Right ventricle myocardium inferior (tissue), 1 donor: ENCODE measurements at regions of chr19 and their contacts with region 1.

Region 1: GRCh38 chr19:49546825-49547565 is 19.2 kb downstream of the RCN3 start:
- DNase-seq: no peak
- ATAC-seq: peak; percentile 83

Region 2: DNA sequence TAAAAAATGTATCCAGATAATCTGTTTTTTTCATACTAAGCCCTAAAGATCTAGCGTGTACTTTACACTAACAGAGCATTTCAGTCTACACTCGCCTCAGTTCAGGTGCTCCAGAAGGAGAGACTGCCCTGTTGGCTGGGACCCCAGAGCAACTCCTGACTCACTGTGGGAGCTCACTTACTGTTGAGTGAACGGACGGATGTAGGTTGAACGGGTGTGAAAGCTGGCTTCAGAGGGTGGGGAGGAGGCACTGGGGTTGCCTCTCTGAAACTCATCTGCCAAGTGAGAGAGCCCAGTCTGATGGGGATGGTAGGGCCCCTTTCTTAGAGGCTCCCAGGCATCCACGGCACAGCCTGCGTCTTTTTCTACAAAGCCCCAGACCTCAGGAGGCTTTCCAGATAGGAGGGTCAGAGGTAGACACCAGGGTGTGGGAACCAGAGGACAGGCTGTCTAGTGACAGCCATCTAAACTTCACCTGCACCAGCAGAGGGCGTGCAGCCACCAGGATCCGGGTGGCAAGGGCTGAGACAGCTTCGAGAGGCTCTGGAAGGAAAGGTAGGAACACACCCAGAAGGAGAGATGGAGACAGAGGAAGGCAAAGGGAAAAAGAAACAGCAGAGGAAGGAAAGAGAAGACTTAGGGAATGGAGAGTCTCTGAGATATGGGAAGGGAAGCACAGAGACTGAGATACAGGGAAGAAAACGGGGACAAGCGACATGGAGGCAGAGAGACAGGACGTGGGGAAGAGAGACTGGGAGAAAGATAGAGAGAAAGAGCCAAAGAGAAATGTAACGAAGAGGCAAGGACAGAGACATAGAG is 155.2 kb before region 1 on chr19:
- intact Hi-C with region 1: loop called (anchors 2 kb)
- DNase-seq: peak; percentile 84
- ATAC-seq: peak; percentile 83

Region 3: DNA sequence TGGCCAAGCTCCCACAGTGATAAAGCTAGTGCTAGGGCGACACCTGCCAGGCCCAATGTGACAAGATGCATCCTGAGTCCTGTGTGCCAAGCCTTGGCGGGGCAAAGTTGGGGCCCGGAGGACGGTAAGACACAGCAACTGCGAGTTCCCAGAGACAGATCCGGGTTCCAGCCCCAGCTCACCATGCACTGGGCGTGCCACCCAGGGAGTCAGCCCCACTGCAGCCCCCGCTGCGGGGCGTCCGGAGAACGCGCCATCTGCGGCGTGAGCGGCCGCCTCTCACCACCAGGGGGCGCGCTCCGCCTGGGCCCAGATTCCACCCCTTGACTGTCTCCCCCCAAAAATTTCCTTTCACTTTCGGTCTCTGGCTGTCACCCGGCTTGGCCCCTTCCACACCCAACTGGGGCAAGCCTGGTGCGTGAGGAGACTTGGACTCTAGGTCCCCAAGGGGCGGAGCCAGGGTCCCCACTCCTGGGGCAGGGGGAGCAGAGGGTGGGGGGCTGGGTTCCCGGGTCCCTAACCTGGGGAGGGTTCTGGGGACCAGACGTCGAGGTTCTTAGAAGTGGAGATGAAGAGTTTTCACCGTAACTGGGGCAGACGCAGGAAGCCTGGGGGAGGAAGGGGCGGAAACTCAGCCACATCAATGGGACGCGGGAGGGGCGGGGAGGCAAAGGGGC is 73.0 kb before region 1 on chr19 and contains the start of gene FLT3LG:
- intact Hi-C with region 1: loop called (anchors 2 kb)
- DNase-seq: peak; percentile 90
- ATAC-seq: peak; percentile 72
- total RNA-seq, gene FLT3LG: 4.7 TPM

Region 4: GRCh38 chr19:49502866-49503581 is 44.0 kb before region 1 on chr19:
- intact Hi-C with region 1: loop called (anchors 1 kb)
- DNase-seq: peak; percentile 56
- ATAC-seq: peak; percentile 59

Region 5: GRCh38 chr19:49580264-49581006 is 33.4 kb after region 1 on chr19 and contains the start of gene NOSIP:
- intact Hi-C with region 1: no loop called
- DNase-seq: peak; percentile 95
- ATAC-seq: peak; percentile 98
- total RNA-seq, gene NOSIP: 49.6 TPM